ENCODE measurements at regions of chr10 and their contacts with region 1.

Region 1: DNA sequence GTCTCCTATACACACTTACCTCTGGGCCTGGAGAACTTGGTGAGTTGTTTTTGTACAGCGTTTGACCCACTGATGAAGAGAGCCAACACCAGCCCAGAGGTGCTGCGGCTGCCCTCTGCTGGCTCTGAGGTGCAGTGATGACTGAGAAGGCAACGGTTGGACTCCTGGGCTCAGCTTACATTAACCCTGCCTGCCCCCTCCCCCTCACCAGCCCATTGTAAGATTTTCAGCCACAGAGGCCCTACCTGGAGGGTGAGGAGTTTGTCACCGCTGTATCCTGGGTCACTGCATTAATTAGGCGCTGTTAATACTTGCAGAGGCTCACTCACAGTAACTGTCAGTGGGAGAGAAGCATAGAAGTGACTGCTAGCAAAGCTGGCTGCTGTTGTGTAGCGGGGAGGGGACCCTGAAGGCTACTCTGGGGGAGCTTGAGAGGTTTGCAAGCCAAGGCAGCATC is 19.0 kb upstream of the ANKRD2 start:
- DNase-seq: peak; percentile 78
- H3K4me3 Mint-ChIP-seq: no peak overlapping the region
- H3K27ac Mint-ChIP-seq: no peak overlapping the region
- H3K4me1 Mint-ChIP-seq: peaks cover 2% of the 10 kb centered on the region
- H3K27me3 Mint-ChIP-seq: no peaks in the 10 kb centered on the region

Region 2: GRCh38 chr10:97307866-97308780 is 245.5 kb before region 1 on chr10:
- CTCF ChIA-PET with region 1: no interaction called
- intact Hi-C with region 1: no loop called
- DNase-seq: no peak
- H3K4me3 Mint-ChIP-seq: no peak overlapping the region
- H3K27ac Mint-ChIP-seq: no peak overlapping the region
- H3K4me1 Mint-ChIP-seq: no peaks in the 10 kb centered on the region
- H3K27me3 Mint-ChIP-seq: no peaks in the 10 kb centered on the region

Region 3: GRCh38 chr10:97407211-97407951 is 146.2 kb before region 1 on chr10:
- CTCF ChIA-PET with region 1: interaction called, 10 read pairs
- intact Hi-C with region 1: loop called (anchors 1 kb)
- DNase-seq: peak; percentile 75
- H3K4me3 Mint-ChIP-seq: no peak overlapping the region
- H3K27ac Mint-ChIP-seq: peak overlapping the region; percentile 25
- H3K4me1 Mint-ChIP-seq: peaks cover 10% of the 10 kb centered on the region
- H3K27me3 Mint-ChIP-seq: no peaks in the 10 kb centered on the region

Region 4: DNA sequence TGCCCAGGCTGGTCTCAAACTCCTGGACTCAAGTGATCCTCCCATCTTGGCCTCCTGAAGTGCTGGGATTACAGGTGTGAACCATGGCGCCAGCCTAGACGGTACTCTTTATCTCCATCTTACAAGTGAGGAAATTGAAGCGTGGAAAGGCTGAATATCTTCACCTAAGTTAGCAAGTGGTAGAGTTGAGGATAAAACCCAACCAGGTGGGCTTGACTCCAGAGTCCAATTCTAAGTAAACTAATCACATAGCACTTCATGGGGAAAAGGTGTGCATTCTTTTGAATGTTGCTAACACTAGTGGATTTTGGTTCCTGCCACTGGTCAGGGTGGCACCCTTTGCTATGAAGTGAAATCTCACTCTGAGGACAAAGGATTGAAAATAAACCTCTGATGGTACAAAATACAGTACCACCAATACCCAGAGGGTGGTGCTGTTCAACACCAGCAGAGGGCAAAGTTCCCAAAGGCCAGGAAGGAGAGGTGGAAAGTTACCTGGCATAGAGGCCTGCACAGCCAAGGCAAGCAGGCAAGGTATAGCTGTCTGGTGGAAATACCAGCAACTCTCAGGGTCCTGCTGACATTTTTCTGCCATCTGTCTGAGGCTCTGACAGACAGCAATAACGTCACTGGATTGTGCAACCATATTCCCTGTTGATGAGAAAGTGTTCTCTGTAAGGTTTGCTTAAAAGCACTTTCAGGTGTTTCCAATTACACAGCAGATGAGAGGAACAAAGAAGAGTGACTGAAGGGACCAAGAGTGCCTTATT is 90.1 kb before region 1 on chr10:
- CTCF ChIA-PET with region 1: interaction called, 63 read pairs
- intact Hi-C with region 1: loop called (anchors 1 kb)
- DNase-seq: peak; percentile 49
- H3K4me3 Mint-ChIP-seq: no peak overlapping the region
- H3K27ac Mint-ChIP-seq: peak overlapping the region; percentile 50
- H3K4me1 Mint-ChIP-seq: no peaks in the 10 kb centered on the region
- H3K27me3 Mint-ChIP-seq: no peaks in the 10 kb centered on the region

Region 5: DNA sequence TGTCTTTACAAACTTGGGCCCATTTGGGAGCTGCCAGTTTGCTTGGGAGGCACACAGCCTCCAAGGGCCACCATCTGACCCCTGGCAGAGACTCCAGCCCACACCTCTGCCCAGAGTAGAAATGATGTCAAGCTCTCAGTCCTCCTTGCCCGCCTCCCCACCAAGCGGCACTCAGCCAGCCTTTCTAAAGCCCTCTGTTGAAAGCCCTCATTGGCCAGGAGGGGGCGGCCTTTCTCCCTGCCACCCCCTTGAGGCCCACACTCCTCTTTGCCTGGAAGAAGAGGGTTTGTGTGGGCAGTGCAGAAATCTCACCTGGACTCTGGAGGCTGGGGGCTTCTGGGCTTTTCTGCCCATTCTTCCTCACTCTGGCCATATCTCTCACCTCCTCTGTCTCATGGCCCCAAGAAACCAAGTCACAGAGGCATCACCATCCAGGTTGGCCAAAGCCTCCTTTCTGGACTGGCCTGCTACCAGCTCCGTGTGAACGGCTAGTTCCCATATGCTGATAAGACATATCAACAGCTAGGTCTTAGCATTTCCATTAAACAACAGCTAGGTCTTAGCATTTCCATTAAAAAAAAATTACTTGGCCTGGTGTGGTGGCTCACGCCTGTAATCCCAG is 18.7 kb before region 1 on chr10:
- CTCF ChIA-PET with region 1: interaction called, 148 read pairs
- intact Hi-C with region 1: loop called (anchors 1 kb)
- DNase-seq: peak; percentile 59
- H3K4me3 Mint-ChIP-seq: no peak overlapping the region
- H3K27ac Mint-ChIP-seq: no peak overlapping the region
- H3K4me1 Mint-ChIP-seq: no peaks in the 10 kb centered on the region
- H3K27me3 Mint-ChIP-seq: no peaks in the 10 kb centered on the region

Region 6: GRCh38 chr10:97543025-97543575 is 10.5 kb before region 1 on chr10:
- CTCF ChIA-PET with region 1: interaction called, 148 read pairs
- intact Hi-C with region 1: no loop called
- DNase-seq: peak; percentile 86
- H3K4me3 Mint-ChIP-seq: no peak overlapping the region
- H3K27ac Mint-ChIP-seq: peak overlapping the region; percentile 68
- H3K4me1 Mint-ChIP-seq: peaks cover 23% of the 10 kb centered on the region
- H3K27me3 Mint-ChIP-seq: no peaks in the 10 kb centered on the region

Region 7: DNA sequence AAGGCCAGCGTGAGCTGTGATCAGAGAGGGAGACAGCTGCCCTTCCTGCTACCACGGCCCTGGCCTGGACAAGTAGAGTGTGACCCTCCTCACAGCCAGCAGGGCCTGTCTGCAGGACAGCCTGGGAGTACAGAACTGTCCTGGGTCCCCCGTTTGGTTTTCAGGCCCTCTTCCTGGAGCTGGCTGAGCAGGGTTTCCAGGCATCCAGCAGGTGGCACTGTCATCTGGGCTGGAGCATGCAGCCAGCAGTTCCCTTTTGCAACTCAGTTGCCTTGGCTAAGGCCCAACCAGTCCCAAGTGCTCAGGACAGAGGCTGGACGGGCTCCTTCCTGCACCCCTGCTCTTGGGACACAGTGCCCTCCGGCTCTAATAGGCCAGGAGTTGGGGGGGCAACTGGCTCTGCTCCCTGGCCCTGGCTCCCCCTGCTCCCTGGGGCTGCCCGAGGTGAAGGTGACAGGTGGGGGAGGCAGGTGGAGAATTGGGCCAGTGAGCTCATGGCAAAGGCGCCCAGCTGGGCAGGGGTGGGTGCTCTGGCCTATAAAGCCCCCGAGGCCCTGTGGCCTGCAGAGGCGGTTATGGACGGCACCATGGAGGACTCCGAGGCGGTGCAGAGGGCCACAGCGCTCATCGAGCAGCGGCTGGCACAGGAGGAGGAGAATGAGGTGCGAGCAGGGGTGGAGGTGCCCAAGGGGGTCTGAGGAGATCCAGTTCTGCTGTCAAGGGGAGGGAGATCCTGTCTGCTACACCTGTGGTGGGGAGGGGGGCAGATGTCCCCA is 18.8 kb after region 1 on chr10 and contains the start of gene ANKRD2:
- CTCF ChIA-PET with region 1: interaction called, 18 read pairs
- intact Hi-C with region 1: no loop called
- DNase-seq: peak; percentile 73
- H3K4me3 Mint-ChIP-seq: no peak within 1 kb of the TSS
- H3K27ac Mint-ChIP-seq: no peak within 1 kb of the TSS
- H3K4me1 Mint-ChIP-seq: no peaks in the 10 kb centered on the region
- H3K27me3 Mint-ChIP-seq: no peaks in the 10 kb centered on the region
- total RNA-seq, gene ANKRD2: 0.26 TPM in 1 of 2 experiments, not detected in the other

Region 8: DNA sequence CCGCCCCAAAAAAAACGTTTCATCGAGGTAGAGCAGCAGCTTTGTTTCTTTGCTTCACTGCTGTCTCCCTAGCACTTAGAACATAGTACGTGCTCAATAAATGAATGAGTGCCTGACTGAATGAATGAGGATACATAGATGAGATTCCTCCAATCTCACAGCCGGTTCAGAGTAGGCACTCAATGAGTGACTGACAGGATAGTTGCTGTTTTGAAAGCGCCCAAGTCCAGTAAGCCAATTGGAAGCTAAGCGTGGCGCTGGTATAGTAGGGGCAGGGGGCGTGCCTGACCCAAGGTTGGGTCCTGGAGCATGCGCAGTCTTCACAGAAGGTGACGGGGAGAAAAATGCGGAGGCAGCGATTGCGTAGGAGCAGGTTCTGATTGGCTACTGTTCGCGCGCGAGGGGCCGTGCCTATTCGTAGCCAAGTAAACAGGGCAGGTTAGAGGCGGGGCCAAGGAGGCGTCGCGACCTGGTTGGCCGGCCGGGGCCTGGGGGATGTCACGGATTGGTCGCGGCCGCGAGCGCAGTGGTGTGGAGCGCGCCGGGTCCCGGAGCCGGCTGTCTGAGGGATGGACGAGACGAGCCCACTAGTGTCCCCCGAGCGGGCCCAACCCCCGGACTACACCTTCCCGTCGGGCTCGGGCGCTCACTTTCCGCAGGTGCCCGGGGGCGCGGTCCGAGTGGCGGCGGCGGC is 86.7 kb after region 1 on chr10 and contains the start of gene PI4K2A:
- CTCF ChIA-PET with region 1: interaction called, 11 read pairs
- intact Hi-C with region 1: no loop called
- DNase-seq: peak; percentile 100
- H3K4me3 Mint-ChIP-seq: peak within 1 kb of the TSS; percentile 93
- H3K27ac Mint-ChIP-seq: peak within 1 kb of the TSS; percentile 73
- H3K4me1 Mint-ChIP-seq: peaks cover 18% of the 10 kb centered on the region
- H3K27me3 Mint-ChIP-seq: no peaks in the 10 kb centered on the region
- total RNA-seq, gene PI4K2A: 8.9 to 9.4 TPM

Region 9: DNA sequence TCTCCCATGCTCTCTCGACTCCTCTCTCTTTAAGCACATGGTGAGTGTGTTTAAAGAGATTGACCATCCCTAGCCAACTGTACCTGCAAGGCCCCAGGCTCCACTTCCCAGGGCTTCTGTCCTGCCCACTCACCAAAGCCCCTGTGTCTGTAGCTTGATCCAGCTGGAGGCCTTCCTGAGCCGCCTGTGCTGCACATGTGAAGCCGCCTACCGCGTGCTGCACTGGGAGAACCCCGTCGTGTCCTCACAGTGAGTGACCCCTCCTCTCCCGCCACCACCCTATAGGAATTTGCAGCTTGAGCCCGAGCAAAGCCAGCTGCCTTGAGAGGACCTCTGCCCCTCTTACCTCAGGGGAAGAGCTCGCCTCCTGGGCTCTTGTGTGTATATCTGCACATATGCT is 194.5 kb after region 1 on chr10:
- CTCF ChIA-PET with region 1: no interaction called
- intact Hi-C with region 1: no loop called
- DNase-seq: no peak
- H3K4me3 Mint-ChIP-seq: no peak overlapping the region
- H3K27ac Mint-ChIP-seq: no peak overlapping the region
- H3K4me1 Mint-ChIP-seq: peaks cover 2% of the 10 kb centered on the region
- H3K27me3 Mint-ChIP-seq: no peaks in the 10 kb centered on the region

Region 10: GRCh38 chr10:98285416-98285815 is 731.8 kb after region 1 on chr10:
- CTCF ChIA-PET with region 1: no interaction called
- intact Hi-C with region 1: no loop called
- DNase-seq: no peak
- H3K4me3 Mint-ChIP-seq: no peak overlapping the region
- H3K27ac Mint-ChIP-seq: no peak overlapping the region
- H3K4me1 Mint-ChIP-seq: no peaks in the 10 kb centered on the region
- H3K27me3 Mint-ChIP-seq: peaks cover 7% of the 10 kb centered on the region

Measured in activated naive CD4-positive, alpha-beta T cell treated with anti-CD3 and anti-CD28 coated beads for 36 hours (primary cell).